ENCODE measurements at regions of chr6 and their contacts with region 1.

Region 1: DNA sequence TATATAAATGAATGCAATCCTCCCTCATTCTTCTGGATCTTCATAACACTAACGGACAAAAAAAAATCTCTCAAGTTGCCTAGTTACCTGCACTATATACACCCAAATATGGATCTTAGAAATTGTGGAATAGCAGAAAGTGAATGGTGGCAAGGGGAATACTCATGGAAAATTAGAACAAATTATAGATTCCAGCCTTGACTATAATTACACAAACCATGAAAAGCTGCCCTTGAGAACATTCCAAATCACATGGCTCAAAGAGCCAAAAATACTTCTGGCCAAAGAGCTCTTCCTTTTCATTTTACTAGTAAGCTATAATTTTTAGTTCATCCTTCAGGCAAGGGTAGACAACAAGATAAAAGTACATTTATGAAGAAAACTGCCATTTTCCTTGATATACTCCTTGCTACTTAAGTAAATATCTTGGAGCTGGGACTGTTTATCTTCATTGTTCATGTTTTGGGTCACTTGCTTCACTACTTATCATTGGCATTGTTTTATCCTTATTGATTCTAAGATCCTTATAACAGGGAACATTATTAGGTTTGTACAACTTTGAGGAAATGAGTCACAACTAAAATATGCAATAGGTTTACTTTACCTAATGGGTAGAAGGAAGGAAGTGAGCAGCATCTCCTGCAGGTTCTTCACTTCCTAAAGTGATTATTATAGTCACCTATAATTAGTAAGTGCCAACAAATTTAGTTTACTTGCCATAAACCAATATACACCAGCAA is 6.4 kb upstream of the MTRES1 start:
- DNase-seq: no peak
- H3K4me3 ChIP-seq: no peak overlapping the region
- H3K27ac ChIP-seq: no peak overlapping the region
- H3K4me1 ChIP-seq: no peaks in the 10 kb centered on the region
- H3K27me3 ChIP-seq: no peaks in the 10 kb centered on the region
- CTCF ChIP-seq: no peak
- POLR2A ChIP-seq: no peak

Region 2: GRCh38 chr6:107237992-107238660 is 216.5 kb after region 1 on chr6:
- intact Hi-C with region 1: loop called (anchors 10 kb)
- DNase-seq: no peak
- H3K4me3 ChIP-seq: no peak overlapping the region
- H3K27ac ChIP-seq: peak overlapping the region in 1 of 3 donors; percentile 3
- H3K4me1 ChIP-seq: peaks cover 22 to 26% of the 10 kb centered on the region in 2 donors
- H3K27me3 ChIP-seq: no peaks in the 10 kb centered on the region
- CTCF ChIP-seq: no peak
- POLR2A ChIP-seq: no peak